ENCODE measurements at regions of chr11 and their contacts with region 1.

Region 1: DNA sequence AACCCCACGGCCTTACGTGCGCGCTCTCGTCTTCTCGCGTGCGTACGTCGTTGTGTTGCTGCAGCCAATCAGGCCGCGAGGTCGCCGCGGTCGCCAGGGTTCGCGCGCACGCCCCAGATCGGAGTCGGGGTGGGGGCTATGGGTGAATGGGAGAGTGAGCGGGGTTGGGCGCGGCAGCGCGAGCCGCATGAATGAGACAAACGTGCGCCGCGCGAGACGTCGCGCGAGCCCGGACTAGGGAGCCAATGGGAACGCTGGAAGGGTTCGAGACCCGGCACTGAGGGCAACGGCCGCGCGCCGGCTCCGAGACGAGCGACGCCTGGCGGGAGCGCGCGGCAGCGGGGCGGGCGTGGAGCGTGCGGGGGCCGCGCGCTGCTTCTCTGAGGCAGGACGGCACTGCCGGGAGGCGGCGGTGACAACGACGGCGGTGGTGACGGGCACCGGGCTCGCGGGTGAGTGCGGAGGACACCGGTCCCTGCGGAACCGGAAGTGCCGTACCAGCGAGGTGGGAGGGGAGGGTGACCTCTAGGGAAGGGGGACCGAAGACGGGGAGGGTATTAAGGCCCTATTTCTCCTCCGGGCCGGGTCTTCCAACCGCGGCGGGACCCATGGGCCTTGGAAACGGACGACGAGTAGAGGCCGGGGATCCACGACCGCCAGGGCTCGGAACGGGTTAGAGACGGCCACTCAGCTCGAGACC is at the start of gene ZDHHC5:
- DNase-seq: peak; percentile 99
- H3K4me3 ChIP-seq: peak within 1 kb of the TSS; percentile 72 to 76
- H3K27ac ChIP-seq: peak within 1 kb of the TSS; percentile 92 to 95
- H3K4me1 ChIP-seq: peaks cover 0 to 26% (median 18%) of the 10 kb centered on the region in 4 donors
- H3K27me3 ChIP-seq: no peaks in the 10 kb centered on the region
- CTCF ChIP-seq: peak; percentile 47 to 48

Region 2: GRCh38 chr11:57335343-57336110 is 332.4 kb before region 1 on chr11 and contains the start of gene SSRP1:
- intact Hi-C with region 1: loop called (anchors 5 kb)
- DNase-seq: peak; percentile 88 to 92
- H3K4me3 ChIP-seq: peak within 1 kb of the TSS; percentile 83 to 95
- H3K27ac ChIP-seq: peak within 1 kb of the TSS; percentile 90 to 94
- H3K4me1 ChIP-seq: peaks cover 0 to 17% (median 16%) of the 10 kb centered on the region in 4 donors
- H3K27me3 ChIP-seq: peaks cover 0 to 16% of the 10 kb centered on the region in 2 donors
- CTCF ChIP-seq: no peak

Region 3: GRCh38 chr11:57638005-57638781 is 29.7 kb before region 1 on chr11:
- intact Hi-C with region 1: no loop called
- DNase-seq: peak in 1 of 2 donors; percentile 69
- H3K4me3 ChIP-seq: peak overlapping the region; percentile 81 to 91
- H3K27ac ChIP-seq: peak overlapping the region; percentile 76
- H3K4me1 ChIP-seq: peaks cover 3 to 32% (median 26%) of the 10 kb centered on the region in 4 donors
- H3K27me3 ChIP-seq: no peaks in the 10 kb centered on the region
- CTCF ChIP-seq: no peak

Region 4: DNA sequence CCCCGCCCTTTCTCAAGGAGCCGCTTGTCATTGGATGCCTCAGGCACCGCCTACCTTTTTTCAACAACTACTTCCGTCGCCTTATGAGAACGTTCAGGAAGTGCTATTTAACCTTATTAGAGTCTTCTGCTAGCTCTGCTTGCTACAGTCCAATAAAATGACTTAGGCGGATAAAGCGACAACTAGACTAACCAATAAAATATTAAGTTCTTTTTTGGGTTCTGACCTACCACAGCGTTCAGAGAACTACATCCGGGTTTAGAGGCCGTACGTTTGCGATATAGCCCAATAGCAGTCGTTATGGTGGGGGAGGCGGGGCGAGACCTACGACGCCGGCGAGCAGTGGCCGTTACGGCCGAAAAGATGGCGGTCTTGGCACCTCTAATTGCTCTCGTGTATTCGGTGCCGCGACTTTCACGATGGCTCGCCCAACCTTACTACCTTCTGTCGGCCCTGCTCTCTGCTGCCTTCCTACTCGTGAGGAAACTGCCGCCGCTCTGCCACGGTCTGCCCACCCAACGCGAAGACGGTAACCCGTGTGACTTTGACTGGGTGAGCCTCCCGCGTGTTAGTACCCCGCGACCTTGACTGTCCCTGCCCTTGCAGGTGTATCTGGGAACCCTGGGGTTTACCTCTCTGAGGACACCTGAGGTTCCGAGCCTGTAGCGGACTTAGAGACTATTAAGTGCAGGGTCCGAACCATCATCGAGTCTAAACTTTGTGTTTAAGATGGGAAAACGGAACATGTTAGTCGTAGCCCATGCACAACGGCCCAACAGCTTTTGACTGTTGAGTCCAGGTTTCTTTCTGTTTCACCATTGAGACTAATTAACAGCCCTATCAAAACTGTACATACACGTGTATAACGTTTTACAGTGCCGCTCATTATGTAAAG is 44.6 kb after region 1 on chr11 and contains the start of gene TMX2:
- intact Hi-C with region 1: loop called (anchors 10 kb)
- DNase-seq: peak; percentile 94 to 96
- H3K4me3 ChIP-seq: peak within 1 kb of the TSS; percentile 88 to 93
- H3K27ac ChIP-seq: peak within 1 kb of the TSS; percentile 78 to 86
- H3K4me1 ChIP-seq: peaks cover 0 to 46% (median 31%) of the 10 kb centered on the region in 4 donors
- H3K27me3 ChIP-seq: no peaks in the 10 kb centered on the region
- CTCF ChIP-seq: no peak

Region 5: DNA sequence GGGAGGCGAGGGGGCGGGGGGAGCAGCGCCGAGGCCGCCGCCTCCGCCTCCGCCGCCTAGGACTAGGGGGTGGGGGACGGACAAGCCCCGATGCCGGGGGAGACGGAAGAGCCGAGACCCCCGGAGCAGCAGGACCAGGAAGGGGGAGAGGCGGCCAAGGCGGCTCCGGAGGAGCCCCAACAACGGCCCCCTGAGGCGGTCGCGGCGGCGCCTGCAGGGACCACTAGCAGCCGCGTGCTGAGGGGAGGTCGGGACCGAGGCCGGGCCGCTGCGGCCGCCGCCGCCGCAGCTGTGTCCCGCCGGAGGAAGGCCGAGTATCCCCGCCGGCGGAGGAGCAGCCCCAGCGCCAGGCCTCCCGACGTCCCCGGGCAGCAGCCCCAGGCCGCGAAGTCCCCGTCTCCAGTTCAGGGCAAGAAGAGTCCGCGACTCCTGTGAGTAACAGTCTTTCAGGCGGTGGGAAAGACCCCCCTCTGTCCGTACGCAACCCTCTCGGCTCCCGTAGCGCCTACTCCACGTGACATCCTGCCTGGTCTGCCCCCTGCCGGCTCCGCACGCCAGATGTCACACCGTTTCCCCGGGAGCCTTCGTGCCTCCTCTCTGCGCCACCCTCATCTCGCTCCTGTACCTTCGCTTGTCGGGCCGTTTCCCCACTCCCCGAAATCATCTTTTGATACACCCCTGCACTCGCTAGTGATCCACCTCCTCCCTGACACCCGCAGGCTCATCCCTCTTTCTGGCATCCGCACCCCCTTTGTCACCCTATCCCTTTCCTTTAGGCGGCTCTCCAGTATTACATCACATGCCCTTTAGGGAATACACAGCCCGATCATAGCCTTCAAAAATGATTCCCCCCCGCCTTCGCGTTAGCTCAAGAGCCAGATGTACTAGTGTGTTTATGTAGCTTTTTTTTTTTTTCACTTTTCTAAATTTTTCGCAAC is 911.6 kb after region 1 on chr11:
- intact Hi-C with region 1: loop called (anchors 5 kb)
- DNase-seq: peak; percentile 93 to 96
- H3K4me3 ChIP-seq: peak overlapping the region; percentile 90 to 98
- H3K27ac ChIP-seq: peak overlapping the region; percentile 100
- H3K4me1 ChIP-seq: peaks cover 0 to 71% (median 42%) of the 10 kb centered on the region in 4 donors
- H3K27me3 ChIP-seq: no peaks in the 10 kb centered on the region
- CTCF ChIP-seq: peak; percentile 71 to 86

Measured in tibial artery (tissue), 4 donors.